Panc1 (cell line): ENCODE measurements at regions of chr5 and their contacts with region 1.

Region 1: DNA sequence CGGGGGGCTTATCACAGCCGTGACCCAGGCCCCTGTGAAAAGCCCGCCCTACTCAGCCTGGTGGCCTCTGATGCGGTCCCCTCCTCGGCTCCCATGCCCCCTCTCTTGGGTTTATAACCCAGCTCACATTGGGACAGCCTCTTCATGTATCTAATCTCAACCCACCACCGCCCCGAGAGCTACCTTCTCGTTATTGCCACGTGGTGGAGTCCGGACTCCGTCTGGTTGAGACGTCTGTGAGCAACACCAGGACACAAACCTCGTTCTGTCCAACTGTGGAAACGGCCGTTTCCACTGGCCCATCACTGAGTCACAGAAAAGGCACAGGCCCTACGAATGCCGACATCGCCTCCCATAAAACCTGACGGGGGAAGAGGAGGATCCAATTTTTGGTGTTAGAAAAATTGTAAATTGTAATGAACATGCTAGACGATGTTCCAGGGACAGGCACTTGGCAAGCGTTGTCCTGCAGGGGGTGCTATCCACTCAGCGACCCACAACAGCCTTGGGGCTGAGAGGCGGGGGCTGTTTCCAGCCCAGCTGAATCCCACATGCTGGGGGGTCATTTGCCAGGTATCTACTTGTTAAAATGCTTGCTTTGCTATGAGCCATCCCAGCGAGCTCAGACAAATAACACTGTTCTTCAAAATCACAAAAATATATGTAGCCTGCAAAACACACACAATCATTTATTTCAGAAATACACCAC is 37.3 kb upstream of the N4BP3 start:
- DNase-seq: peak; percentile 63
- ATAC-seq: peak; percentile 95
- H3K4me3 ChIP-seq: peak overlapping the region in 1 of 2 experiments; percentile 19; a peak in 2 of 4 replicates
- H3K27ac ChIP-seq: no peak overlapping the region
- H3K4me1 ChIP-seq: no peaks in the 10 kb centered on the region
- H3K27me3 ChIP-seq: no peaks in the 10 kb centered on the region
- CTCF ChIP-seq: peak; percentile 96

Region 2: GRCh38 chr5:178090858-178091540 is 15.0 kb after region 1 on chr5:
- CTCF ChIA-PET with region 1: no interaction called
- POLR2A ChIA-PET with region 1: no interaction called
- in situ Hi-C with region 1: no loop called
- intact Hi-C with region 1: no loop called
- DNase-seq: no peak
- ATAC-seq: no peak
- H3K4me3 ChIP-seq: no peak overlapping the region
- H3K27ac ChIP-seq: no peak overlapping the region
- H3K4me1 ChIP-seq: no peaks in the 10 kb centered on the region
- H3K27me3 ChIP-seq: no peaks in the 10 kb centered on the region
- CTCF ChIP-seq: no peak

Region 3: DNA sequence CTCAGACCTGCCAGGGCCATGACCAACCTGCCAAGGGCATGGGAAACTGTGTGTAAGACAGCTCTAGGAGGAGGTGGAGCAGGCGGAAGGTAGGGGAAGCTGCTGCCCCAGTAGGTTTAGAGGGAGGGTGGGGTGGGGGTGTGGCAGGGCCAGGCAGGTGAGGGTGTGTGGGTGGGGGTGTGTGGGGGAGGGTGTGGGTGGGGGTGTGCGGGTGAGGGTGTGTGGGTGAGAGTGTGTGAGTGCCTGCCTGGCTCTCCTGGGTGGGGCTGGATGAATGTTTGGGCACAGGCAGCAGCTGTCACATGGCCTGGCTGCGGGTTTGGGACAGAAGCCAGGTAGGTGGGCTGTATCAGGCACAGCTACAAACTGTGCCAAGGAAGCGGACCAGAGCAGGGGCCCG is 28.5 kb after region 1 on chr5:
- CTCF ChIA-PET with region 1: interaction called, 13 read pairs
- POLR2A ChIA-PET with region 1: no interaction called
- in situ Hi-C with region 1: no loop called
- intact Hi-C with region 1: no loop called
- DNase-seq: no peak
- ATAC-seq: no peak
- H3K4me3 ChIP-seq: no peak overlapping the region
- H3K27ac ChIP-seq: no peak overlapping the region
- H3K4me1 ChIP-seq: no peaks in the 10 kb centered on the region
- H3K27me3 ChIP-seq: no peaks in the 10 kb centered on the region
- CTCF ChIP-seq: no peak

Region 4: DNA sequence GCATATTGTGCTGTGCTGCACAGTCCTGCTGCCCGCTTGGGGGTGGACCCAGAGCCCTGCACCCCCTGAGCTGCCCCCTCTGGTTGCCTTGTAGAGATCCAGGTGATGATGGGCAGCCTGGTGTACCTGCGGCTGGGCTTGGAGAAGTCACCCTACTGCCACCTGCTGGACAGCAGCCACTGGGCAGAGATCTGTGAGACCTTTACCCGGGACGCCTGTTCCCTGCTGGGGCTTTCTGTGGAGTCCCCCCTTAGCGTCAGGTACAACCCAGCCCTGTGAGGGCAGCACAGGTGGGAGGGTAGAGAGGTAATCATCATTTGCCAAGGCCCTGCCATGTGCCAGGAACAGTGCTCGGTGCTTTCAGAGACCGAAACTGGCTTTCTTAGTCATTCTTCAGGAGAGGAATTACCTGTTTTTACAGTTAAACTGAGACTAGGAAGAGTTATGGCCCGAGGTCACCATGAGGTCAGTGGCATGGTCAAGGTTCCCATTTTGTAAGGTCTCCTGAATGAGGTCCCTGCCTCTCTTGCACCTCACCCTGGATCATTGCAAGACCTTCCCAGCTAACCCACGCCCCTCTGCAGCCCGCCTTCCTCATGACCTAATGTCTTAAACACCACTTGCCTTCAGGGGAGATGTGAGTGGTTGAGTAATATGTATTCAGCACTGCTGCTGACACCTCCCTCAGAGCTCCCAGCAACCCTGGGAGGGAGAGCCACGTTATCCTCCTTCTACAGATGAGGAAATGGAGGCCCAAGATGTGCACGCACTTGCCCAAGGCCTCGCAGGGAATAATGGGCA is 70.2 kb after region 1 on chr5:
- CTCF ChIA-PET with region 1: interaction called, 9 read pairs
- POLR2A ChIA-PET with region 1: interaction called, 3 read pairs
- in situ Hi-C with region 1: no loop called
- intact Hi-C with region 1: loop called (anchors 1 kb)
- DNase-seq: peak; percentile 47
- ATAC-seq: peak; percentile 88
- H3K4me3 ChIP-seq: no peak overlapping the region
- H3K27ac ChIP-seq: no peak overlapping the region
- H3K4me1 ChIP-seq: no peaks in the 10 kb centered on the region
- H3K27me3 ChIP-seq: no peaks in the 10 kb centered on the region
- CTCF ChIP-seq: peak; percentile 93

Region 5: GRCh38 chr5:178163772-178164735 is 88.1 kb after region 1 on chr5:
- CTCF ChIA-PET with region 1: interaction called, 19 read pairs
- POLR2A ChIA-PET with region 1: no interaction called
- in situ Hi-C with region 1: no loop called
- intact Hi-C with region 1: loop called (anchors 1 kb)
- DNase-seq: peak; percentile 69
- ATAC-seq: peak; percentile 99
- H3K4me3 ChIP-seq: peak overlapping the region; percentile 15 to 46
- H3K27ac ChIP-seq: no peak overlapping the region
- H3K4me1 ChIP-seq: no peaks in the 10 kb centered on the region
- H3K27me3 ChIP-seq: no peaks in the 10 kb centered on the region
- CTCF ChIP-seq: peak; percentile 98

Region 6: GRCh38 chr5:178259623-178260536 is 183.9 kb after region 1 on chr5:
- CTCF ChIA-PET with region 1: interaction called, 11 read pairs
- POLR2A ChIA-PET with region 1: no interaction called
- in situ Hi-C with region 1: no loop called
- intact Hi-C with region 1: no loop called
- DNase-seq: no peak
- ATAC-seq: no peak
- H3K4me3 ChIP-seq: no peak overlapping the region
- H3K27ac ChIP-seq: no peak overlapping the region
- H3K4me1 ChIP-seq: no peaks in the 10 kb centered on the region
- H3K27me3 ChIP-seq: no peaks in the 10 kb centered on the region
- CTCF ChIP-seq: no peak